Common myeloid progenitor, CD34-positive (primary cell): ENCODE measurements at regions of chr5 and their contacts with region 1.

Region 1: GRCh38 chr5:122192497-122193496 is 63.5 kb downstream of the ZNF474 start:
- DNase-seq: peak; percentile 71 to 85 (median 84)
- H3K4me3 ChIP-seq: peak overlapping the region in 1 of 7 experiments; percentile 12
- H3K27ac ChIP-seq: no peak overlapping the region
- H3K4me1 ChIP-seq: peaks cover under 1 to 32% (median 20%) of the 10 kb centered on the region in 4 experiments
- H3K27me3 ChIP-seq: no peaks in the 10 kb centered on the region

Region 2: DNA sequence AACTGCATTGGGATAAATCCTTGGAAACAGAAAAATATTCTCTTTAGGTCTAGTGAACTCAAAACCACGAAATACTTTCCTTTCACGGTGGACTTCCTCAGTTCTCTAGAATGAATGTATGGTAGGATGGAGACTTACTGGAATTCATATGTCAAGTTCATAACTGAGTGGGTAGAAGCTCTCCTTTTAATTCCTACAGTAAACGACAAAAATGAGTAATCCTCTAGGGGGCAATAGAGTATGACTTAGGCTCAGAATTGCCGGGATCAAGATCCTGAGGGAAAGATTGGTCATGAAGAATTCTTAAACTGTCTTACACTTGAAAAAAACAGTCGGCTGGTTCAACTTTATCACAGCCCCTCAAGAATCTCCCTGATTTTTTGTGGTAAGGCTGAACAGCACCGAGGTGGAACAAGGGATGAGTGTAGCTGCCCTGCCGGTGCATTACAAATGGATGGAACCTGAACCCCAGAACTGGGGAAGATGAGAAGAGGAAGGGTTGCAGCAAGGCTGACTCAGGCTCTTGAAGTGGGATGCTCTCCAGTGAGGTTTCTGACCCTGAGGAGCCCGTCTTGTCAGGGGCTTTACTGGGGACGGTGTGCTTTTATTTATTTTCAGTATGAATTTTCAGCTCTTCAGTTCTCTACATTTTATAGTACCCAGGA is 100.7 kb before region 1 on chr5:
- CTCF ChIA-PET with region 1: no interaction called
- POLR2A ChIA-PET with region 1: no interaction called
- DNase-seq: no peak
- H3K4me3 ChIP-seq: no peak overlapping the region
- H3K27ac ChIP-seq: no peak overlapping the region
- H3K4me1 ChIP-seq: peaks cover 0 to 14% (median 0%) of the 10 kb centered on the region in 4 experiments
- H3K27me3 ChIP-seq: no peaks in the 10 kb centered on the region

Region 3: GRCh38 chr5:122202952-122203351 is 10.2 kb after region 1 on chr5:
- CTCF ChIA-PET with region 1: interaction called, 14 read pairs
- POLR2A ChIA-PET with region 1: no interaction called
- DNase-seq: peak in 1 of 3 donors; percentile 33
- H3K4me3 ChIP-seq: no peak overlapping the region
- H3K27ac ChIP-seq: no peak overlapping the region
- H3K4me1 ChIP-seq: no peaks in the 10 kb centered on the region
- H3K27me3 ChIP-seq: no peaks in the 10 kb centered on the region